Prostate gland (tissue), 2 donors: ENCODE measurements at regions of chr1 and their contacts with region 1.

Region 1: GRCh38 chr1:109667452-109668122 is at the start of gene GSTM2:
- DNase-seq: peak; percentile 86
- H3K4me3 ChIP-seq: peak within 1 kb of the TSS; percentile 45 to 47
- H3K27ac ChIP-seq: peak within 1 kb of the TSS; percentile 6 to 43
- H3K4me1 ChIP-seq: no peaks in the 10 kb centered on the region
- H3K27me3 ChIP-seq: no peaks in the 10 kb centered on the region
- CTCF ChIP-seq: no peak
- POLR2A ChIP-seq: peak; percentile 25
- total RNA-seq, gene GSTM2: 47.5 to 79.5 TPM

Region 2: DNA sequence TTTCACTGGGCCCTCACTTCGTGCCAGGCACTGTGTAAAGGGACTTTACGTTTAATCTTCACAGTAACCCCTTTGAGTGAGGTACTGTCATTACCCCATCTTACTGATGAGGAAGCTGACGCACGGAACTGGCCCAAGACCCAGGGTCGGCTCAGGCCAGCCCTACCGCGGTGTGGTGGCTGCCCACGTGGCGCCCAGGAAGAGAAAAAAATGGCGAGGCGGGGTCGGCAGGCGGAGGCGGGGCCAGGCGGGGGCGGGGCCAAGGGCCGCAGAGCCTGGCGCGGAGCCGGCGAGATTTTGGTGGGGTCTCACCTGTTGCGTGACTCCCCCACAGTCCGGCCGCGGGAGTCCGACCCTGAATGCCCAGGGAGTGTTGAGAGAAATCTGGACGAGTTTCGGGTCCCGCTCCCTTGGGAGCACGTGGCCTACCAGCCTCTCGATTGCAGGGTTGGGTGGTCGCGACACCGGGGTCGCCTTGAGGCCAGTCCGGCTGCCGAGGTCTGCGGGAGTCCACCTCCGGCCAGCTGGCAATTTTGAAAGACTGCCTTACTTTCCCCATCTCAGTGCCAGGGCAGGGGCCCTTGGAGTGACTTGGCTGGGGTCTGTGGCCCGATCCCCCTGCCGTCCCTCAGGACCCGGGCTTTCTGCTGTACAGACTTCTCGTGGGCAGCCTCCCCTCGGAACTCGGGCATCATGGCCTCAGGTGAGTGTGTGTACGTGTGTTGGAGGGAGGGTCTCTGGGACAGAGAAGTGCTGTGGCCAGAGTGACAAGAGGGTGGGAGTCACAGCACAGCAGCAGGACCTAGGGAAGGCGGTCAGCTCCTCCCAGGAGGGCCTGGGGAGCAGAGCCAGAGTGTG is 47.8 kb before region 1 on chr1 and contains the starts of genes AMPD2 and GNAT2:
- intact Hi-C with region 1: no loop called
- DNase-seq: peak; percentile 59
- H3K4me3 ChIP-seq: peak within 1 kb of the TSS; percentile 58 to 64
- H3K27ac ChIP-seq: peak within 1 kb of the TSS; percentile 82
- H3K4me1 ChIP-seq: peaks cover 8% of the 10 kb centered on the region
- H3K27me3 ChIP-seq: no peaks in the 10 kb centered on the region
- CTCF ChIP-seq: no peak
- POLR2A ChIP-seq: peak; percentile 10
- total RNA-seq, gene AMPD2: 40.1 to 72.3 TPM
- total RNA-seq, gene GNAT2: not detected

Region 3: DNA sequence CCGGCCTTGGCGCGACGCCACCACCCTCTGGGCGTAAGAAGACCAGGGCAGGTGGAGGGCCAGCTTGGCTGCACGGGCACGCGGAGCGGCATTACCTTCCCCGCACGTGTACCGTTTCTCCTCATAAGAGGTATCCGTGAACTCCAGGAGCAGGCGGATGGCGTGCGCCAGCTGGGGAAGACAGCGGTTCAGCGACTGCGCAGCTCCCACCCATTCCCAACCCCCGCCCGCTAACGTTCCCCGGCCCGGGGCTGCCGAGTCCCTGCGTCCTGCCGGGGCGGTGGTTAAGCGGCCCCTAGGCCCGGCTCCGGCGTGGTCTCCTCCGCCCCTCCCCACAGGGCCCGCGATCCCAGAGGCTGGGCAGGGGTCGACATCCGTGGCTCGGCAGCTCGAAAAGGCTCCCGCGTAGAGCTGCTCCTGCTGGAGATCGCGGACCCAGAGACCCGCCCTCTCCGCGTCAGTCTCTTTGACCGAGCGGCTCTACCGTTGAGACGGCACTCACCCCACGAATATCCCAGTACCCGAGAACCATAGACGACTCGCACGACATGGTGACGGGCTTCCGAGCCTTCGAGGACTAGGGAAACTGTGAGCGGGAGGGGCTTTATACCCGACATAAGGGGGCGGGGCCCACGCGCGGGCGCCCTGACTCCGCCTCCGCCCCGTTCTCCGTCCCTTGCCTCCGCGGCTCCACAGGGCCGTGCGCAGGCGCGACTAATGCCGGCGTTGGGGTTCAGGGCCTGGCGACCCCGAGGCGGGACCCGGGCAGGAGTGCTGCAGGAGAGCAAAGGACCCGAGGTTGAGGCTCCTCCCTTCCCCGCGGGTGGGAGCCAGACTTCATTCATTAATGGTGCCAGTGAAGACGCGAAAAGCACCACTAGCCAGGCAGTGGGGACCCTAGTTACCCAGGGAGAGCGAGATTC is 72.4 kb after region 1 on chr1:
- intact Hi-C with region 1: loop called (anchors 2 kb)
- DNase-seq: peak; percentile 75
- H3K4me3 ChIP-seq: peak overlapping the region; percentile 49 to 81
- H3K27ac ChIP-seq: peak overlapping the region; percentile 71 to 83
- H3K4me1 ChIP-seq: no peaks in the 10 kb centered on the region
- H3K27me3 ChIP-seq: no peaks in the 10 kb centered on the region
- CTCF ChIP-seq: no peak
- POLR2A ChIP-seq: peak; percentile 78